Right ventricle myocardium inferior (tissue), 1 donor: ENCODE measurements at regions of chr14 and their contacts with region 1.

Region 1: DNA sequence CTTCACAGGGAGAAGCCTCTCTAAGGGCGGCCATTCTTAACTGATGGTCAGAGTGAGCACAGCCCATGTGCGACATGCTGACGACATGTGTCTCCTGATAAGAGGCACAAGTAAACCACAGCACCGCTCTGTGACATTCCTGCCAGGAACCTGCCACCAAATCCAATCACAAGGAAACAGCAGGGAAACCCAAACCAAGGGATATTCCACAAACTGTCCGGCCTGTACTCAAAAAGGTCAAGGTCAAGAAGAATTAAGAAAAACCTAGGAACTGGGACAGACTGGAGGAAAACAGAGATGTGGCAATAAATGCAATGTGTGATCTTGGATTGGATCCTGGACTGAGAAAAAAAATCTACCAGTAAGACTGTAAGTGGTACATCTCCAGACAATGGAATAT is 91.9 kb downstream of the SYNE3 start:
- DNase-seq: no peak
- ATAC-seq: peak; percentile 76

Region 2: DNA sequence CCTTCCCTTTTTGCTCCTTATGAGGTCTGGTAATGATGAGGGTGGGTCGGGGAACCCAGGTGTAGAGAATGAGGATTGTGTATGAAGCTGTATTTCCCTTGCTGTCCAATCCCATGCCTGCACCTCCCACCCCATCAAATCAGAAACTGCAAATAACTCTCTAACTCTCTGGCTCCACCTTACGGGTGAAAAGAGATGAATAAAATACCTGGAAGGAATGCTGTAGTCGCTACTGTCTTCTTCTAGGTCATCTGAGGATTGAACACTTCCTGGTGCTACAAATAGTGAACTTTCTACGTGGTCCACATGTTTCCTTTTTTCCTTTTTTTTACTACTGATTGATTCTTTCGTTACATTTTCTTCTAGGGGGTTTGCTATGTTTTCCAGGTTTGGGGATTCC is 228.2 kb before region 1 on chr14:
- intact Hi-C with region 1: loop called (anchors 10 kb)
- DNase-seq: no peak
- ATAC-seq: no peak

Region 3: GRCh38 chr14:95319312-95320021 is 105.1 kb before region 1 on chr14 and contains the start of gene CLMN:
- intact Hi-C with region 1: loop called (anchors 5 kb)
- DNase-seq: no peak
- ATAC-seq: peak; percentile 51
- total RNA-seq, gene CLMN: 7.6 TPM